Endothelial cell of umbilical vein (primary cell): ENCODE measurements at regions of chr1 and their contacts with region 1.

Region 1: GRCh38 chr1:203006948-203007871 is at the start of gene TMEM183A:
- DNase-seq: peak; percentile 96
- H3K4me3 ChIP-seq: peak within 1 kb of the TSS; percentile 53 to 92 (median 89)
- H3K27ac ChIP-seq: peak within 1 kb of the TSS; percentile 56
- H3K4me1 ChIP-seq: peaks cover 11% of the 10 kb centered on the region
- H3K27me3 ChIP-seq: no peaks in the 10 kb centered on the region
- CTCF ChIP-seq: no peak
- POLR2A ChIP-seq: peak; percentile 94
- total RNA-seq, gene TMEM183A: 59.4 and 65.5 TPM in 2 replicates

Region 2: DNA sequence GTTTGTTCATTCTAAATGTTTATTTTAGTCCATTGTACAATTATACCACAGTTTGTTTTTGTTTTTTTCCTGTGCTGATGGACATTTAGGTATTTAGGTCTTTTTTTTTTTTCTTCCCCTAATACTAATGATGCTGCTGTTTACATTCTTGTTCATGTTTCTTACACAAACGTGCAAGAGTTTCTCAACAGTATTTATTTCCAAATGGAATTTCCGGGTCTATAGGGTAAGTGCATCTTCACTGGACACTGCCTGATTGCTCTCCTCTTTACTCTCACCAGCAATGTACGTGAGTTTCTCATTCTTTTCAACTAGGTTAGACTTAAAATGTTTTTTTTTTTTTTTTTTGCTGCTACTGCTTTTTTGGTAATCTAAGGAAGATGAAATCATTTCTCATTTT is 536.0 kb before region 1 on chr1:
- CTCF ChIA-PET with region 1: no interaction called
- POLR2A ChIA-PET with region 1: no interaction called
- dilution Hi-C with region 1: no loop called
- intact Hi-C with region 1: loop called (anchors 5 kb)
- DNase-seq: no peak
- H3K4me3 ChIP-seq: no peak overlapping the region
- H3K27ac ChIP-seq: no peak overlapping the region
- H3K4me1 ChIP-seq: peaks cover 8% of the 10 kb centered on the region
- H3K27me3 ChIP-seq: no peaks in the 10 kb centered on the region
- CTCF ChIP-seq: no peak
- POLR2A ChIP-seq: no peak

Region 3: GRCh38 chr1:202810615-202811295 is 196.5 kb before region 1 on chr1 and contains the start of gene PCAT6:
- CTCF ChIA-PET with region 1: no interaction called
- POLR2A ChIA-PET with region 1: no interaction called
- dilution Hi-C with region 1: no loop called
- intact Hi-C with region 1: loop called (anchors 2 kb)
- DNase-seq: peak; percentile 92
- H3K4me3 ChIP-seq: peak within 1 kb of the TSS; percentile 58 to 81 (median 60)
- H3K27ac ChIP-seq: peak within 1 kb of the TSS; percentile 46
- H3K4me1 ChIP-seq: peaks cover 13% of the 10 kb centered on the region
- H3K27me3 ChIP-seq: peaks cover 9 to 10% of the 10 kb centered on the region in 2 experiments
- CTCF ChIP-seq: no peak
- POLR2A ChIP-seq: peak; percentile 90
- total RNA-seq, gene PCAT6: 1.5 and 1.7 TPM in 2 replicates

Region 4: GRCh38 chr1:202852163-202852904 is 154.9 kb before region 1 on chr1:
- CTCF ChIA-PET with region 1: no interaction called
- POLR2A ChIA-PET with region 1: no interaction called
- dilution Hi-C with region 1: no loop called
- intact Hi-C with region 1: no loop called
- DNase-seq: peak; percentile 70
- H3K4me3 ChIP-seq: no peak overlapping the region
- H3K27ac ChIP-seq: no peak overlapping the region
- H3K4me1 ChIP-seq: no peaks in the 10 kb centered on the region
- H3K27me3 ChIP-seq: no peaks in the 10 kb centered on the region
- CTCF ChIP-seq: peak; percentile 60 to 76
- POLR2A ChIP-seq: no peak

Region 5: GRCh38 chr1:203046984-203047630 is 39.9 kb after region 1 on chr1:
- CTCF ChIA-PET with region 1: no interaction called
- POLR2A ChIA-PET with region 1: no interaction called
- dilution Hi-C with region 1: no loop called
- intact Hi-C with region 1: no loop called
- DNase-seq: peak; percentile 44
- H3K4me3 ChIP-seq: no peak overlapping the region
- H3K27ac ChIP-seq: no peak overlapping the region
- H3K4me1 ChIP-seq: no peaks in the 10 kb centered on the region
- H3K27me3 ChIP-seq: peaks cover 0 to 2% of the 10 kb centered on the region in 2 experiments
- CTCF ChIP-seq: no peak
- POLR2A ChIP-seq: no peak

Region 6: DNA sequence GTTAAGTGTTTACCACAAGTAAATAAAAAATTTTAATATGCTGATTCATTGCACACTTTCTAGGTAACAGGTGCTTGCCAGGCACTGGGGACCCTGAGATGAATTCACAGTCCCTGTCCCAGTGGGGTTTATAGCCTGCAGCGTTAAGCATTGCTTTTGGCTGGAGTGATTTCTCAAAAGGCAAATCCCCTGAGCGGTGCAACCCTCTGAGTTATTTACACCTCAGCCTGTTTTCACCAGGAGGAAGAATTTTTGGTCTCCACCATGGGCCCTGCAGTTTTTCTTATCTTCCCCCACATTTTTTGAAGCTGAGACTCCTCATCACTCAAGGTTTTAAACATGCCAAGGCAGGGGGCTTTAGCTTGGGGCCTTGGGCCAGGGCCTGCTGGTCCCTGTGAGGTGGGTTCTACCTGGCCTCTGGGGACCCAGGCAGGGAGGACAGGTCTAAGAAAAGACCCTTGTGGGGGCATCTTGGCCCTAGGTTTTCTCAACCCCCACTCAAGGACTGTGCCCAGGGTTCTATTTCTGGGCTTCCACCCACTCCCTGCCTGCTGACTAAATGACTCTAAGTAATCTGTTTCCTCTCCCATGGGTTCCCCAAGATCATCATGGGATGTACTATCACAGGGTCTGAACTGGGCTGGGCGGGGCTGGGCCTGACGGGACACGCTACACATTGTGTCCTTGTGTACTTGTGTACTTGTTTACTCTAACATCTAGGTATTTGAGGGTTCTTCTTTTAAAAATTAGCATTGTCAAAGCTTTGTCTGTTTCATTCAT is 232.5 kb after region 1 on chr1:
- CTCF ChIA-PET with region 1: no interaction called
- POLR2A ChIA-PET with region 1: no interaction called
- dilution Hi-C with region 1: no loop called
- intact Hi-C with region 1: no loop called
- DNase-seq: no peak
- H3K4me3 ChIP-seq: no peak overlapping the region
- H3K27ac ChIP-seq: no peak overlapping the region
- H3K4me1 ChIP-seq: no peaks in the 10 kb centered on the region
- H3K27me3 ChIP-seq: peaks cover 4 to 6% of the 10 kb centered on the region in 2 experiments
- CTCF ChIP-seq: no peak
- POLR2A ChIP-seq: no peak